ENCODE measurements at regions of chr6 and their contacts with region 1.

Region 1: GRCh38 chr6:53794720-53795253 is at the start of gene LRRC1:
- DNase-seq: peak; percentile 93 to 97 (median 95)
- ATAC-seq: peak; percentile 85
- H3K4me3 ChIP-seq: peak within 1 kb of the TSS; percentile 88
- H3K4me1 ChIP-seq: peaks cover 10% of the 10 kb centered on the region
- CTCF ChIP-seq: no peak
- total RNA-seq, gene LRRC1: 57.7 to 105 (median 89.4) TPM

Region 2: GRCh38 chr6:53956068-53956711 is 161.4 kb after region 1 on chr6:
- intact Hi-C with region 1: loop called (anchors 5 to 10 kb)
- DNase-seq: peak in 2 of 3 donors; percentile 81 to 84
- ATAC-seq: peak; percentile 86
- H3K4me3 ChIP-seq: no peak overlapping the region
- H3K4me1 ChIP-seq: no peaks in the 10 kb centered on the region
- CTCF ChIP-seq: peak; percentile 36

Region 3: DNA sequence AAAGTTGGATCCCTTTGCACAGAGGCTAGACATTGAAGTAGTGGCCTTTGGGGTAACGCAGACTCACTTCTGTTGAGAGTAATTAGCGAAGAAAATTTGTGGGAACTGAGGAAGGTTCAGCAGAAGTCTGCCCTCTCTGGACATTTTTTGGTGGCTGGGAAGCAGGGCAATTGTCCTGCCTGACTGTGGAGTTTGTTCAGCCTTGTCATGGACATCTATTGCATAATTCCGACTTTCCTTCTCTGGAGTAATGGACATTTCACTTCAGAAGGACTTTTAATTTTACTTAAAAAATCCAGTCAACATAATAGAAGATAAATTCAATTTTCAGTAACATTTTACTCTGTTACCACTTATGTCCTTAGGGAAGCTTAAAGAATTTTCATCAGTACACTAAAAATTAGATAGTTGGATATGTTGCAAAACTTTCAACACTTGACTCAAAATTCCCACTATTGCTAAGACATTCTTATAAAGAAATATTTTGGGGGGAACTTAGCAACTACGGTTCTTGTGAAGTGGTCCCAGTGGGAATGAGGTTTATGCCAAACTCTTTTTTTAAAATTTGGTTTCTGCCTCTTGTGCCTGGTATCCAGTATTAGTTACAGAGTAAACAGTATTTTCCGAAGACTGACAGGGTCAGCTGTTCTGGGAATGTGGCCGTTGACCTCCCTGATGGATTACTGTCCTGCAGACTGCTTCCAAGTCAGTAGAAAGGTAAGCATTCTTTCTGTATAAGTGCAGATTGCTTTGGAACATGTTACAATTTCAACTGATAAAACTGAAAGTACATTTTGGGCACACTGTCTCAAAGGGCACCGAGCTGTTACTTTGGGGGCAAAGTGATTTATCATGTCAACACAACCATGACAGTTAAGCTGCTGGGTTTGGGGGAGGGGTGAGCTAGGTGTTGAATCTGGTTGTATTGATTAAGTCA is 215.8 kb after region 1 on chr6:
- intact Hi-C with region 1: no loop called
- DNase-seq: peak in 1 of 3 donors; percentile 4
- ATAC-seq: peak; percentile 49
- H3K4me3 ChIP-seq: no peak overlapping the region
- H3K4me1 ChIP-seq: no peaks in the 10 kb centered on the region
- CTCF ChIP-seq: no peak